Activated CD8-positive, alpha-beta memory T cell treated with anti-CD3 and anti-CD28 coated beads, Interleukin-2, amount 10 ng/mL, durations not matched to agents 7 days and 5 days (primary cell): ENCODE measurements at regions of chr15 and their contacts with region 1.

Region 1: DNA sequence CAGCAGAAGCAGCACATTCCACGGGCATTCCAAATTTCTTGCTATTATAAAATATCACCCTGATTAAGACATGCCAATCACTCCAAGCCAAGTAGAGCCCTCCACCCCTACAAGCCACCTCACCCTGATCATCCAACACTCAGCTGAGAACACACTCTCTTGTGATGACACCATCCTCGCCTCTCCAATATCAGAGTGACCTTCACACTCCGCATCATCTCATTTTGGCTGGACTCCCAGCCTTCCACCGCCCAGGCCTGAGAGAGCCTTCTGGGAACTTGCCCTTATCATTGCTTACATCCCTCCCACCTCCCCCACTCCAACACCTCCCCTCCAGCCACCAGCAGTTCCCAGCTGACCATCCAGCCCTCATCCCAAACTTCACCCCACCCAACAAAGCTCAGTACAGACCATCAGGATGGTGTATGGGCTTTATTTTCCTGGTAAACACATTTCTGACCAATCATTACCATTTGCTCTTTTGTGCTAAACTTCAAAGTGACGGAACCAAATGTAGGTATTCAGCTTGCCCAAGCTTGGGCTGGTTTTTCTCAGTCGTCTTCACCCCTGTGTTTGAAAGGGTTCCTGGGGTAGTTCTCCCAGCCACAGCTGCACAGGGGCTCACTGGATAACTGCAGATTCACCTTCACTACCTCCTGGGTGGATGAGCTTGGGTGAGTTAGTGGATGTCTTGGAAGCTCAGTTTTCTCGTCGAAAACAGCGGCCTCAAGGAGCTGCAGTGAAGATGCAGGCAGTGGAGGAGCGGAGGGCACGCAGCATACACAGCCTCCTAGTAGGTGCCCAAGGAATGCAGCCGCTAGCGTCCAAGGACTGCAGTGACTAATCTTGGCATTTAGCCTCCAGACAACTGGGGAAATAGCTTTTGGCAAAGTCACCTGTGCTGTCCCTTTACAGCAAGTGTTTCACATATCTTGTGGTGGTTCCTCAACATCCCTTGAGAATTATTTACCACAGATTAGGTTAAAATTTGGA is 115.1 kb downstream of the LIPC start:
- DNase-seq: no peak
- ATAC-seq: no peak
- H3K4me3 Mint-ChIP-seq: no peak overlapping the region
- H3K27ac Mint-ChIP-seq: peak overlapping the region; percentile 94
- H3K4me1 Mint-ChIP-seq: peaks cover 52% of the 10 kb centered on the region
- H3K27me3 Mint-ChIP-seq: no peaks in the 10 kb centered on the region

Region 2: GRCh38 chr15:58517682-58518525 is 29.0 kb before region 1 on chr15:
- CTCF ChIA-PET with region 1: interaction called, 10 read pairs
- DNase-seq: no peak
- ATAC-seq: peak; percentile 17
- H3K4me3 Mint-ChIP-seq: no peak overlapping the region
- H3K27ac Mint-ChIP-seq: peak overlapping the region; percentile 83
- H3K4me1 Mint-ChIP-seq: peaks cover 50% of the 10 kb centered on the region
- H3K27me3 Mint-ChIP-seq: no peaks in the 10 kb centered on the region

Region 3: DNA sequence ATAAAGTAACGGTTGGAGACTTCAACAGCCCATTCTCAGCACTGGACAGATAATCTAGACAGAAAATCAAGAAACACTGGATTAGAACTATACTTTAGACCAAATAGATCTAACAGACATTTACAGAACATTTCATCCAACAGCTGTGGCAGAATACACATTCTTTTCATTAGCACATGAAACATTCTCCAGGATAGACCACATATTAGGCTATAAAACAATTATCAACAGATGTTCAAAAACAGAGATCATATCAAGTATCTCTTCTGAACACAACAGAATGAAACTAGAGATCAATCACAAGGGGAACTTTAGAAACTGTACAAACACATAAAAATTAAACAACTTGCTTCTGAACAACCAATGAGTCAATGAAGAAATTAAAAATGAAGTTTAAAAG is 69.2 kb after region 1 on chr15:
- CTCF ChIA-PET with region 1: no interaction called
- DNase-seq: no peak
- ATAC-seq: no peak
- H3K4me3 Mint-ChIP-seq: no peak overlapping the region
- H3K27ac Mint-ChIP-seq: no peak overlapping the region
- H3K4me1 Mint-ChIP-seq: peaks cover 12% of the 10 kb centered on the region
- H3K27me3 Mint-ChIP-seq: no peaks in the 10 kb centered on the region